Ascending aorta (tissue), 2 donors: ENCODE measurements at regions of chr11 and their contacts with region 1.

Region 1: GRCh38 chr11:128497061-128497775 is 90.1 kb downstream of the ETS1 start:
- DNase-seq: peak in 1 of 2 donors; percentile 77
- H3K4me3 ChIP-seq: peak overlapping the region in 1 of 2 donors; percentile 34
- H3K27ac ChIP-seq: peak overlapping the region; percentile 76 to 80
- H3K4me1 ChIP-seq: peaks cover 11 to 76% of the 10 kb centered on the region in 2 donors
- H3K27me3 ChIP-seq: no peaks in the 10 kb centered on the region
- CTCF ChIP-seq: no peak

Region 2: DNA sequence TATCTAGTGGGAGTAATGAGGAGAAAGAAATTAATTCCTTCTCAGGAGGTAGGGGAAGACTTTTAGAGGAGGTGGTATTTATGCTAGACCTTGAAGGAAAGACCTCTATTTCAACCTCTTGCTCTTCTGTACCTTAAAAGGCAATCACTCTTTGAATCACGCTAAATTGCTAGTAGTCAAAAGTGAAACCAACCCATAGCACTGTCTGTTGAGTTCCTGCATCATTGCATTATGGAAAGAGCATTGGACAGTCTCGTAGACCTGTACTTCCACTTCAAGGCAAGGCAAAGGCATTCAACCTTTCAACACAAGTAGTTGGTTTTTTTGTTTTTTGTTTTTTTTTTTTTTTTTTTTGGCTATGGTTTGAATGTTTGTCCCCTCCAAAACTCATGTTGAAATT is 680.3 kb before region 1 on chr11:
- intact Hi-C with region 1: no loop called
- DNase-seq: no peak
- H3K4me3 ChIP-seq: no peak overlapping the region
- H3K27ac ChIP-seq: no peak overlapping the region
- H3K4me1 ChIP-seq: no peaks in the 10 kb centered on the region
- H3K27me3 ChIP-seq: no peaks in the 10 kb centered on the region
- CTCF ChIP-seq: no peak

Region 3: DNA sequence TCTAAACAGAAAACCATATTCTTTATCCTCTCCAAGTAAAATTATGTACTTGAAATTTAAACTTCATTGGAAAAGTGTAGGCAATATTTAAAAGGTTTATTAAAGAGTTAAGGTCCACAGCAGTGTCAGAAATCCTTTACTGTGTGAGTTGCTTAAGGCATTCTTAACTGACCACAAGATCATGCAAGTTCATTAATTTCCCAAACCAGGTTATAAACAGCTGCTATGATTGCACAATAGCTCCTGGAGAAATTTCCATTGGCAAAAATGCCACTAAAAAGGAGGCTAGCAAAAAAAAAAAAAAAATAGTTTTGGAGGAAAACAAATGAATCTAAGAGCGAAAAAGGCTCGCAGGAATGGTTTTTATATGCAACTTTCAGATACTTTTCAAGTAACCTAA is 16.1 kb before region 1 on chr11:
- intact Hi-C with region 1: loop called (anchors 2 kb)
- DNase-seq: no peak
- H3K4me3 ChIP-seq: no peak overlapping the region
- H3K27ac ChIP-seq: peak overlapping the region; percentile 51 to 54
- H3K4me1 ChIP-seq: peaks cover 0 to 19% of the 10 kb centered on the region in 2 donors
- H3K27me3 ChIP-seq: no peaks in the 10 kb centered on the region
- CTCF ChIP-seq: no peak